ENCODE measurements at regions of chr13 and their contacts with region 1.

Region 1: GRCh38 chr13:51206584-51206983 is 15.6 kb upstream of the FAM124A start:
- DNase-seq: no peak
- H3K4me3 ChIP-seq: no peak overlapping the region
- H3K27ac ChIP-seq: no peak overlapping the region
- H3K4me1 ChIP-seq: no peaks in the 10 kb centered on the region
- H3K27me3 ChIP-seq: no peaks in the 10 kb centered on the region
- CTCF ChIP-seq: no peak

Region 2: GRCh38 chr13:51148952-51149573 is 57.5 kb before region 1 on chr13:
- CTCF ChIA-PET with region 1: interaction called, 20 read pairs
- dilution Hi-C with region 1: no loop called
- in situ Hi-C with region 1: no loop called
- intact Hi-C with region 1: no loop called
- DNase-seq: peak; percentile 8
- H3K4me3 ChIP-seq: no peak overlapping the region
- H3K27ac ChIP-seq: no peak overlapping the region
- H3K4me1 ChIP-seq: no peaks in the 10 kb centered on the region
- H3K27me3 ChIP-seq: peaks cover 2% of the 10 kb centered on the region
- CTCF ChIP-seq: peak; percentile 49 to 69